T-cell (primary cell): ENCODE measurements at regions of chr9 and their contacts with region 1.

Region 1: GRCh38 chr9:127489471-127490115 is 38.3 kb downstream of the LRSAM1 start:
- DNase-seq: no peak
- ATAC-seq: no peak
- H3K4me3 ChIP-seq: no peak overlapping the region
- H3K4me3 Mint-ChIP-seq: no peak overlapping the region
- H3K27ac ChIP-seq: no peak overlapping the region
- H3K27ac Mint-ChIP-seq: no peak overlapping the region
- H3K4me1 ChIP-seq: no peaks in the 10 kb centered on the region
- H3K4me1 Mint-ChIP-seq: no peaks in the 10 kb centered on the region
- H3K27me3 ChIP-seq: no peaks in the 10 kb centered on the region
- H3K27me3 Mint-ChIP-seq: no peaks in the 10 kb centered on the region

Region 2: GRCh38 chr9:127509251-127509961 is 19.8 kb after region 1 on chr9:
- CTCF ChIA-PET with region 1: no interaction called
- POLR2A ChIA-PET with region 1: no interaction called
- DNase-seq: no peak
- ATAC-seq: no peak
- H3K4me3 ChIP-seq: no peak overlapping the region
- H3K4me3 Mint-ChIP-seq: no peak overlapping the region
- H3K27ac ChIP-seq: no peak overlapping the region
- H3K27ac Mint-ChIP-seq: no peak overlapping the region
- H3K4me1 ChIP-seq: no peaks in the 10 kb centered on the region
- H3K4me1 Mint-ChIP-seq: no peaks in the 10 kb centered on the region
- H3K27me3 ChIP-seq: no peaks in the 10 kb centered on the region
- H3K27me3 Mint-ChIP-seq: no peaks in the 10 kb centered on the region

Region 3: GRCh38 chr9:128243215-128244018 is 753.8 kb after region 1 on chr9:
- CTCF ChIA-PET with region 1: no interaction called
- POLR2A ChIA-PET with region 1: interaction called in 1 of 2 experiments, 10 read pairs
- DNase-seq: no peak
- ATAC-seq: no peak
- H3K4me3 ChIP-seq: no peak overlapping the region
- H3K4me3 Mint-ChIP-seq: no peak overlapping the region
- H3K27ac ChIP-seq: no peak overlapping the region
- H3K27ac Mint-ChIP-seq: no peak overlapping the region
- H3K4me1 ChIP-seq: peaks cover 0 to 7% of the 10 kb centered on the region in 2 experiments
- H3K4me1 Mint-ChIP-seq: peaks cover 5 to 9% (median 6%) of the 10 kb centered on the region in 3 donors
- H3K27me3 ChIP-seq: peaks cover 0 to 62% of the 10 kb centered on the region in 2 experiments
- H3K27me3 Mint-ChIP-seq: peaks cover 15 to 25% of the 10 kb centered on the region in 2 donors